ENCODE measurements at regions of chr17 and their contacts with region 1.

Region 1: GRCh38 chr17:17356149-17356930 is 53.2 kb downstream of the NT5M start:
- DNase-seq: peak; percentile 82
- H3K4me3 ChIP-seq: no peak overlapping the region
- H3K27ac ChIP-seq: no peak overlapping the region
- H3K4me1 ChIP-seq: peaks cover 14% of the 10 kb centered on the region
- H3K27me3 ChIP-seq: no peaks in the 10 kb centered on the region
- CTCF ChIP-seq: peak; percentile 99 to 100
- POLR2A ChIP-seq: no peak

Region 2: DNA sequence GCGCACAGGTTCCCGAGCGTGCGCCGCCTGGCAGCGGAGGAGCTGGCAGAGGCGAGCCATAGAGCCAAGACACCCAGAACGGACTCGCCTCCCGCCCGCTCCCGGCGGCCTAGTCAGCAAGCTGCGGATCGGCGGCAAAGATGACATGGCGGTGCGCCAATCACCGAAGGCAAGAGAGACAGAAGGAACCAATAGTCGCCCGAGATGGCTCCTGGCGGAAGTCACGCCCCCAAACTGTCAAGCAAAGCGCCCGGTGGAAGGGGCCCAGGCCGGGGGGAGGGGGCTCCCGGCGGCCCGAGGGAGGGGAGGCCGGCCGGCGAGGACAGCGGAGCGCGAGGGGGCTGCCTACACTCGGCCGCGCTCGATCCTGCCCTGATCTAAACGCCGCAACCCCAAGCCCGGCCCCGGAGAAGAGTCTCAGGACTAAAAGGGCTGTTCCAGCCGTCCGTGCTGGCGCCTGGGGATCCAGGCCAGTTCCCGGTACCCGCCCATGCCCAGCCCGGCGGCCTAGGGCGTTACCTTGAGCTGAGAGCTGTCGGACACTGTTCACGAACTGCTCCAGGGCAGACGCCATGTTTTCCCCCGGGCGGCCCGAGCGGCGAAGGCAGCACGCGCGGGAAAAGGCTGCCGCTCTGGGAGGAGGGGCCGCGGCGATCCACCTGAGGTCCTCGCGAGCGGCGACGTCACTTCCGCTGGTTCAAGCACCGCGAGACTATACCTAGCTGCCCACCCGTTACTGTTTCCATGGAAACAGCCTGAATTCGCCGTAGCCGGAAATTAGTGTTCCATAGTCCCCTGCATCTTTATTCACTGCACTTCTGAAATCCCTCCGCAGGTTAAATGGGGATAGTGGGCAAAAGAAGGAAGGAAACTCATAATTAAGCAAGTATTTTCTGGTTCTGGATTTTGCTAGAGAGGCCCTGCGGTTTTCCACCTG is 75.5 kb before region 1 on chr17 and contains the start of gene COPS3:
- CTCF ChIA-PET with region 1: no interaction called
- POLR2A ChIA-PET with region 1: no interaction called
- dilution Hi-C with region 1: no loop called
- intact Hi-C with region 1: loop called (anchors 2 kb)
- DNase-seq: peak; percentile 98
- H3K4me3 ChIP-seq: peak within 1 kb of the TSS; percentile 70 to 98 (median 79)
- H3K27ac ChIP-seq: peak within 1 kb of the TSS; percentile 86
- H3K4me1 ChIP-seq: peaks cover 13% of the 10 kb centered on the region
- H3K27me3 ChIP-seq: no peaks in the 10 kb centered on the region
- CTCF ChIP-seq: no peak
- POLR2A ChIP-seq: peak; percentile 76
- total RNA-seq, gene COPS3: 68.4 and 80.9 TPM in 2 replicates

Region 3: DNA sequence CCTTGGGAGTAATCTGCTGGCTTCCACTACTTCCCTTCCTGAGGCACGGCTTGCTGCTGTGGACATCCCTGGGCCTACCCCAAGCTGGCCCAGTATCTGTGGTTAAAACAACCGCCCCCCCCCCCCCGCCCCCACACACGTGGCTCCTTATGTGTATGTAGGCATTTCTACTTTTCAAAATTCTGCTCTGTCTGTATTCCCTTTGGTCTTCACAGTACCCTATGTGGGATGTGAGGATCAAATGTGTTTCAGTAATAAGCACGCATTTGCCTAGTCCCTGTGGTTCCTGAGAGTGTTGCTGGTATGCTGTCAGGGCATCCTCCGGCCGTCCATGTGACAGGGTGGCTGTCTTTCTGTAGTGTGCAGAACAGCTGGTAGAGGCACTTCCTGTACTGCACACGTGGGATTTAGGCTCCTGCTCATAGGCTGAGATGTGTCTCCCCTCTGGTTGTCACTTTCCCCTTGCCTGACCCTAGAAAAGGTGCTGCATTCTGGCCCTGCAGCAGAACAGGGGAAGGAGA is 51.0 kb before region 1 on chr17:
- CTCF ChIA-PET with region 1: no interaction called
- POLR2A ChIA-PET with region 1: no interaction called
- dilution Hi-C with region 1: no loop called
- intact Hi-C with region 1: no loop called
- DNase-seq: no peak
- H3K4me3 ChIP-seq: no peak overlapping the region
- H3K27ac ChIP-seq: no peak overlapping the region
- H3K4me1 ChIP-seq: peaks cover 10% of the 10 kb centered on the region
- H3K27me3 ChIP-seq: no peaks in the 10 kb centered on the region
- CTCF ChIP-seq: no peak
- POLR2A ChIP-seq: no peak

Region 4: GRCh38 chr17:17372856-17373520 is 16.6 kb after region 1 on chr17:
- CTCF ChIA-PET with region 1: no interaction called
- POLR2A ChIA-PET with region 1: no interaction called
- dilution Hi-C with region 1: no loop called
- intact Hi-C with region 1: no loop called
- DNase-seq: no peak
- H3K4me3 ChIP-seq: no peak overlapping the region
- H3K27ac ChIP-seq: no peak overlapping the region
- H3K4me1 ChIP-seq: no peaks in the 10 kb centered on the region
- H3K27me3 ChIP-seq: peaks cover 7% of the 10 kb centered on the region in 2 experiments
- CTCF ChIP-seq: no peak
- POLR2A ChIP-seq: no peak

Region 5: DNA sequence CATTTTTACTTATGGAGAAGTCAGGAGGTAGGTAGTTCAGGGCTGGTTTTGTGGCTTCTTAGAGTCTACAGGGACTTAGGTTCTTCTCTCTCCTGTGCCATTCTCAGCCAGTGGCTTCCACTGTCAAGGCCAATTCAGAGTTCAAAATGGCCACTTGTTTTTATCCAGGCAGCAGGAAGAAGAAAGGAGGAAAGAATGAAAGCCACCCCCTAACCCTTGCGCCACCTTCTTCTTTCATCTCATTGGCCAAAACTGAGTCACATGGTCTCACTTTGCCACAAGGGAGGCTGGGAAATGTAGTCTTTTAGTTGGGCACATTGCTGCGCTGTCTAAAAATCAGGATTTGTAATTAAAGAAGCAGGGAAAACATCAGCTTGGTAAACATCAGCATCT is 59.7 kb after region 1 on chr17:
- CTCF ChIA-PET with region 1: interaction called, 3 read pairs
- POLR2A ChIA-PET with region 1: no interaction called
- dilution Hi-C with region 1: no loop called
- intact Hi-C with region 1: loop called (anchors 1 kb)
- DNase-seq: peak; percentile 91
- H3K4me3 ChIP-seq: no peak overlapping the region
- H3K27ac ChIP-seq: peak overlapping the region; percentile 94
- H3K4me1 ChIP-seq: peaks cover 48% of the 10 kb centered on the region
- H3K27me3 ChIP-seq: no peaks in the 10 kb centered on the region
- CTCF ChIP-seq: no peak
- POLR2A ChIP-seq: no peak

Region 6: DNA sequence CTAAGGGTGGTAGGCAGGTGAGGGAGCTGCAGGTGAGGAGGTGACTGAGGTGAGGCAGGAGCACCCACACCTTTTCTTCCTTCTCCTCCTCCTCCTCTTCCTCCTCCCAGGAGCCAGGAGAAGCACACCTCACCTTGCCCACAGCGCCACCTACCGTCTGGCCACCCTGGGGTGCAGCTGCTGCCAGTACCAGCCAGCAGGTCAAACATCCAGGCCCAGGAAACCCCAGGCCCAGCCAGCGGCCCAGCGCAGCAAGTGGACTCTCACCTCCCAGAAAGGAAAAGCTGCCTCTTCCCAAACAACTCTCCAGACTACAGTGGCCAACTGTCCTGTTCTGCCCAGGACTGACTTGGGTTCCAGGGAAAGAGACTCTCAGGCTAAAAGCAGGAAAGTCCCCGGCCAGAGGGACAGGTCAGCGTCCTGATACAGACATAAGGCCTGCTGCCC is 212.4 kb after region 1 on chr17:
- CTCF ChIA-PET with region 1: interaction called, 64 read pairs
- POLR2A ChIA-PET with region 1: no interaction called
- dilution Hi-C with region 1: no loop called
- intact Hi-C with region 1: loop called (anchors 1 kb)
- DNase-seq: peak; percentile 38
- H3K4me3 ChIP-seq: no peak overlapping the region
- H3K27ac ChIP-seq: no peak overlapping the region
- H3K4me1 ChIP-seq: no peaks in the 10 kb centered on the region
- H3K27me3 ChIP-seq: no peaks in the 10 kb centered on the region
- CTCF ChIP-seq: peak; percentile 85 to 89
- POLR2A ChIP-seq: no peak

Region 7: GRCh38 chr17:17641621-17642409 is 285.5 kb after region 1 on chr17:
- CTCF ChIA-PET with region 1: interaction called, 111 read pairs
- POLR2A ChIA-PET with region 1: no interaction called
- dilution Hi-C with region 1: no loop called
- intact Hi-C with region 1: loop called (anchors 1 kb)
- DNase-seq: peak; percentile 74
- H3K4me3 ChIP-seq: no peak overlapping the region
- H3K27ac ChIP-seq: no peak overlapping the region
- H3K4me1 ChIP-seq: no peaks in the 10 kb centered on the region
- H3K27me3 ChIP-seq: no peaks in the 10 kb centered on the region
- CTCF ChIP-seq: peak; percentile 82 to 85
- POLR2A ChIP-seq: no peak